Panc1 (cell line): ENCODE measurements at regions of chr12 and their contacts with region 1.

Region 1: GRCh38 chr12:33488036-33488435 is 48.4 kb upstream of the SYT10 start:
- DNase-seq: no peak
- ATAC-seq: no peak
- H3K4me3 ChIP-seq: no peak overlapping the region
- H3K27ac ChIP-seq: no peak overlapping the region
- H3K4me1 ChIP-seq: no peaks in the 10 kb centered on the region
- H3K27me3 ChIP-seq: no peaks in the 10 kb centered on the region
- CTCF ChIP-seq: no peak

Region 2: DNA sequence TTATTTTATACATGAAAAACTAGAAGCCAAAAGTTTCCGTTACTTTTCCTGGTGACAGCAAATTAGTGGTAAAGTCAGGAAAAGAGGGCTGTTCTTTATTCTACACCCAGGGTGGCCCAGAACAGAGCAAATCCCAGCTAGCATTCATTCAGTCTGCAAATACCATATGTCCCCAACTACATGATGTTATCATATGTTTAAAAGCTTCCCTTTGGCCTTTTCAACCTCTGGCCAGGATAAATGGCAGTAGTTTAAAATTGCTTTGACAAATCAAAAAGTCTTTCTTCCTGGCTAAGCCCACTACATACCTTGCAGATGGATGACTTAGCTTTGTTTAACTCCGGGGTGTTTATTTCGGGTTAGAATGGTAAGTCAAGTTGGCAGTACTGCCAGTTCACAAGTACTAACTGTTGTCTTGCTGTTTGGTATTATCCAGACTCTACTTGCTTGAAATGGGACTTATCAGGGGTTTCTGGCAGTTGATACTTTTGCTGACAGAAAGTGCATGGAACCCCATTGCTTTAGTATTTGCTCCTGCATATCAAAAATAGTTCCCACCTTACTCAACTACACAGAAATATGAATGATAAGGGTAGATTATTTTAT is 661.1 kb before region 1 on chr12:
- CTCF ChIA-PET with region 1: interaction called, 14 read pairs
- POLR2A ChIA-PET with region 1: no interaction called
- in situ Hi-C with region 1: no loop called
- intact Hi-C with region 1: no loop called
- DNase-seq: no peak
- ATAC-seq: no peak
- H3K4me3 ChIP-seq: no peak overlapping the region
- H3K27ac ChIP-seq: no peak overlapping the region
- H3K4me1 ChIP-seq: no peaks in the 10 kb centered on the region
- H3K27me3 ChIP-seq: 0 out of 2 replicates have a peak, but pooled peaks cover 3% of the 10 kb centered on the region
- CTCF ChIP-seq: no peak

Region 3: DNA sequence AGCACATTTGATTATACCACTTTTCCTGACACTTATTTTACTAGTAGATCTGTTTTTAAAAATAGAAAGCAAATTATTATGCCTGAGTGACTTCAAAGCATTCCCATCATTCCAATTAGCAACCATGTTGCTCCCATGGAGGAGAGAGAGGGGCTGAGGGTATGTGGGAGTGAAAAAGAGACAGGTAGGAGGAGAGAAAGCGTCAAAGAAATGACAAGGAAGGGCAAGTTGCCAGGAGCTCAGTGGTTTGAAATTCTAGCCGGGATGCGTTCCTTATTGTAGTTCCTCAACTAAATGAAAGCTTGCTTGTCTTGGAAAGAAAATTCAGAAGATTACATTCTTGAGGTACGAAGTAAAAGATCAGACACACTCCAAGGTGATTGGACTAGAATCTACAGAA is 499.1 kb before region 1 on chr12:
- CTCF ChIA-PET with region 1: no interaction called
- POLR2A ChIA-PET with region 1: interaction called, 14 read pairs
- in situ Hi-C with region 1: no loop called
- intact Hi-C with region 1: no loop called
- DNase-seq: no peak
- ATAC-seq: no peak
- H3K4me3 ChIP-seq: no peak overlapping the region
- H3K27ac ChIP-seq: no peak overlapping the region
- H3K4me1 ChIP-seq: no peaks in the 10 kb centered on the region
- H3K27me3 ChIP-seq: no peaks in the 10 kb centered on the region
- CTCF ChIP-seq: no peak

Region 4: DNA sequence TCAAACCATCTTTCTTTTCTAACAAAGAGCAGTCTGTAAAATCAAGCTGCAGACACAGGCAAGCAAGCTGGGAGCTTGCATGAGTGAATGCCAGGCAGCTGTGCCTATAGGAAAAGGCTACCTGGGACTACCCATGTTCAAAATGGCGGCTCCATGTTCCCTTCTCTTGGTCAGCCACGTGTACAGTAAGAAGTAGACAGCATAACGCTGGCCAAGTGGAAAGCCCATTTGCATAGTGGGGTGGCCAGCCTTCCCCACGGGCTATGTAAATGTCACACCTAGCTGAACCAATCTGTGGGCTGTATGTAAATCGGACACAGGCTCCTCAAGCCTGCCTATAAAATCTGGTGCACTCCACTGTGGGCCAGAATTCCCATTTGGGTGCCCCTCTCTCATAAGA is 165.5 kb before region 1 on chr12:
- CTCF ChIA-PET with region 1: no interaction called
- POLR2A ChIA-PET with region 1: no interaction called
- in situ Hi-C with region 1: no loop called
- intact Hi-C with region 1: no loop called
- DNase-seq: no peak
- ATAC-seq: no peak
- H3K4me3 ChIP-seq: no peak overlapping the region
- H3K27ac ChIP-seq: no peak overlapping the region
- H3K4me1 ChIP-seq: no peaks in the 10 kb centered on the region
- H3K27me3 ChIP-seq: no peaks in the 10 kb centered on the region
- CTCF ChIP-seq: no peak

Region 5: DNA sequence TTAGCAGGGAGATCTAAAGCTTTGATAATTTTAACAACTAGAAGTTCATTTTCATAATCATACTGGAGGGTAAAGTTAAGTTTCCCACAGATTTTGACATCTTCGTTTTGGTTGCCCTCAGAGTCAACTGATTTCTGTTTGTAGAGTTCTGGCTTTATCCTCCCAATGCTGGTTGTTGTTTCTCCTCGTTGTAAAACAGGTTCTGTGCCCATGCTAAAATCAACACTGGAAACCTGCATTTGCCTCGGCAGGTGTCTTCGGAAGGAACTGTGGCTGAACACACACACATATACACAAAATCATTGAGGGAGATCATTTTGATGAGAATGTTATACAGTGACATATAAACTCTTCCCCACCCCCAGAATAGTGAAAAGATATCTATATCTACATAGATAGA is 81.0 kb before region 1 on chr12:
- CTCF ChIA-PET with region 1: no interaction called
- POLR2A ChIA-PET with region 1: no interaction called
- in situ Hi-C with region 1: no loop called
- intact Hi-C with region 1: no loop called
- DNase-seq: no peak
- ATAC-seq: no peak
- H3K4me3 ChIP-seq: no peak overlapping the region
- H3K27ac ChIP-seq: no peak overlapping the region
- H3K4me1 ChIP-seq: no peaks in the 10 kb centered on the region
- H3K27me3 ChIP-seq: no peaks in the 10 kb centered on the region
- CTCF ChIP-seq: no peak

Region 6: GRCh38 chr12:33529810-33530209 is 41.8 kb after region 1 on chr12:
- CTCF ChIA-PET with region 1: no interaction called
- POLR2A ChIA-PET with region 1: no interaction called
- in situ Hi-C with region 1: no loop called
- intact Hi-C with region 1: loop called (anchors 5 kb)
- DNase-seq: no peak
- ATAC-seq: no peak
- H3K4me3 ChIP-seq: no peak overlapping the region
- H3K27ac ChIP-seq: no peak overlapping the region
- H3K4me1 ChIP-seq: no peaks in the 10 kb centered on the region
- H3K27me3 ChIP-seq: no peaks in the 10 kb centered on the region
- CTCF ChIP-seq: no peak